ENCODE measurements at regions of chr16 and their contacts with region 1.

Region 1: GRCh38 chr16:29112755-29113347 is 128.0 kb downstream of the LAT start:
- DNase-seq: no peak
- ATAC-seq: no peak
- H3K4me3 ChIP-seq: no peak overlapping the region
- H3K4me3 Mint-ChIP-seq: no peak overlapping the region
- H3K27ac ChIP-seq: no peak overlapping the region
- H3K27ac Mint-ChIP-seq: peak overlapping the region; percentile 72
- H3K4me1 ChIP-seq: peaks cover 9% of the 10 kb centered on the region
- H3K4me1 Mint-ChIP-seq: peaks cover 28% of the 10 kb centered on the region
- H3K27me3 ChIP-seq: no peaks in the 10 kb centered on the region
- H3K27me3 Mint-ChIP-seq: no peaks in the 10 kb centered on the region
- CTCF ChIP-seq: no peak

Region 2: DNA sequence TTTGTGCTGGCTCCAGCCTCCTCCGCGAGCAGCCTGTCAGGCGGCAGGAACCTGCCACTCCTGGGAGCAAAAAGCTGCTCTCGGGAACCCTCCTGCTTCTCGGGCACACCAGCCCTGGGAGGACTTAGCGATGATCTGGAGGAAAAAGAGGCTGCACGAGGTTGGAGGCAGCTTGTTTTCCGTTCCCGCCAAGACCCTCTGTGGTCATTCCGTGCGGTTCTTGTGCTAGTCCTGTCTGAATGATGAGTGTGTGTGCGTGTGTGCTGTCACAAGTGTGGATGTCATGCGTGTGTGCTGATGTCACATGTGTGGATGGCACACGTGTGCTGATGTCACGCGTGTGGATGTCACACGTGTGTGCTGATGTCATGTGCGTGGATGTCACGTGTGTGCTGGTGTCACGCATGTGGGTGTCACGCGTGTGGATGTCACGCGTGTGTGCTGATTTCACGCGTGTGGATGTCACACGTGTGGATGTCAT is 143.7 kb after region 1 on chr16:
- CTCF ChIA-PET with region 1: no interaction called
- POLR2A ChIA-PET with region 1: no interaction called
- intact Hi-C with region 1: loop called in 1 of 2 experiments (anchors 10 kb)
- DNase-seq: no peak
- ATAC-seq: no peak
- H3K4me3 ChIP-seq: no peak overlapping the region
- H3K4me3 Mint-ChIP-seq: no peak overlapping the region
- H3K27ac ChIP-seq: no peak overlapping the region
- H3K27ac Mint-ChIP-seq: no peak overlapping the region
- H3K4me1 ChIP-seq: peaks cover 7% of the 10 kb centered on the region
- H3K4me1 Mint-ChIP-seq: peaks cover 21% of the 10 kb centered on the region
- H3K27me3 ChIP-seq: no peaks in the 10 kb centered on the region
- H3K27me3 Mint-ChIP-seq: no peaks in the 10 kb centered on the region
- CTCF ChIP-seq: no peak

Region 3: DNA sequence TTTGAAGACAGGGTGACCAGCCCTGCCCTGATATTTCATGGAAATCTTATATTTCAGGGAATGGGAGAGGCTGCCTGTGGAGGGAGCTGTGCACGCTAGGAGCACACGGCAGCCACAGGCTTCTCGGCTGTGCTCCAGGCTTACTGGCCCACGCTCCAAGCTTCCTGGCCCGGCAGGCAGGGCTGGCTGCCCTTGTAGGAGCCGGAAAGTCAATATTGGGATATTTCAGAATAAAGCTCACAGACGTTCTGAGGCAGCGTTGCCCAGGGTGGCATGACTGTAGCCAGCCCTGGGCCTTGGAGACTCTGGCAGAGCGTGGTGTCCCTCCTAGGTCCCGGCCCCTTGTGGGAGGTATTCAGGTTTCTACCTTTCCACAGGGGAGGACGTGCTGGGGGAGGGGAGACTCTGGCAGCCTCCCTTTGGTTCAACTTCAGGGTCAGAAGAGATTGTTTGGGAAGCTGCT is 198.0 kb after region 1 on chr16:
- CTCF ChIA-PET with region 1: no interaction called
- POLR2A ChIA-PET with region 1: no interaction called
- intact Hi-C with region 1: loop called in 1 of 2 experiments (anchors 5 kb)
- DNase-seq: no peak
- ATAC-seq: no peak
- H3K4me3 ChIP-seq: no peak overlapping the region
- H3K4me3 Mint-ChIP-seq: no peak overlapping the region
- H3K27ac ChIP-seq: no peak overlapping the region
- H3K27ac Mint-ChIP-seq: no peak overlapping the region
- H3K4me1 ChIP-seq: no peaks in the 10 kb centered on the region
- H3K4me1 Mint-ChIP-seq: no peaks in the 10 kb centered on the region
- H3K27me3 ChIP-seq: no peaks in the 10 kb centered on the region
- H3K27me3 Mint-ChIP-seq: no peaks in the 10 kb centered on the region
- CTCF ChIP-seq: no peak